Cardiac septum (tissue), 1 donor: ENCODE measurements at regions of chr2 and their contacts with region 1.

Region 1: DNA sequence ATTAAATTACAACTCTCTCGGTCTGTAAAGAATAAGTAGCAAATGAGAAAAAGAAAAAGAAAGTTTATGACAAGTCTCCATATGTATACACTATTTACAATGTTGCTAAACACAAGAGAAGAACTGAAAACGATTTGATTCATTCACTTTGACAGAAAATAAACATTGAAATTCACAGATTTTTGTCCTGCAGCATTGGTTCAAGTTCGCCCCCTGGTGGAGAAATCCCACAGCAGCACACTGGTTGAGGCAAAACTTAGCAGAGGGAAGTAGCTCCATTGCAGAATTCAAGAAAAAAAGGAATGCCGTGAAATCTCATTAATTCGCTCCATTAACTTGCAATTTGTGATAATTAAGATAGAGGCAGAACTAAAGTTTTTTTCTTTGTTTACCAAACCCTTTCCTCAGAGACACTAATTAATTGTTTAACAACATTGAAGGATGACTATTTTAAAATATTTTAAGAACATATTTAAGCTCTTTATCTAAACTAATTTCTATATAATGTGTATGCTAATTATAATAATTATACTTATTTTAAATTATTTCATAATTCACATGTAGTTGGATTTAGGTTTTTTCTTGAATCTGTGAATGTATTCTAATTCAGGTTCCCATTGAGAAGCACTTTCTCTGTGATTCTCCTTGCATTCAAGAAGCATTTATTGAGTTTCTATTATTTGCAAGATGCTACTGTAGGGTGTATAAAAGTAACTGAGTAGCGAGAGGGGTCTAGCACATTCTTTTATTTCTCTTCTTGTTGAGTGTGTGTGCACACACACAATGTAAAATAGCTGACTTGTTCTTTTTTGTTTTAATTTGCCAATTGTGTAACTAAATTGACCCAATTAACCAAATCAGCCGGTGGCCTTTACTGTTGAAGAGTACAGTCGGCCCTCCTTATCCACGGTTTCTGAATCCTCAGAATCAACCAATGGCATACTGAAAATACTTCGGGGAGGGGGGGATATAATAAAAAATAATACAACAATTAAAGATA is 74.1 kb downstream of the COL4A3 start:
- DNase-seq: no peak

Region 2: GRCh38 chr2:227132986-227133385 is 105.6 kb before region 1 on chr2:
- intact Hi-C with region 1: loop called (anchors 1 kb)
- DNase-seq: no peak